ENCODE measurements at regions of chr4 and their contacts with region 1.

Region 1: DNA sequence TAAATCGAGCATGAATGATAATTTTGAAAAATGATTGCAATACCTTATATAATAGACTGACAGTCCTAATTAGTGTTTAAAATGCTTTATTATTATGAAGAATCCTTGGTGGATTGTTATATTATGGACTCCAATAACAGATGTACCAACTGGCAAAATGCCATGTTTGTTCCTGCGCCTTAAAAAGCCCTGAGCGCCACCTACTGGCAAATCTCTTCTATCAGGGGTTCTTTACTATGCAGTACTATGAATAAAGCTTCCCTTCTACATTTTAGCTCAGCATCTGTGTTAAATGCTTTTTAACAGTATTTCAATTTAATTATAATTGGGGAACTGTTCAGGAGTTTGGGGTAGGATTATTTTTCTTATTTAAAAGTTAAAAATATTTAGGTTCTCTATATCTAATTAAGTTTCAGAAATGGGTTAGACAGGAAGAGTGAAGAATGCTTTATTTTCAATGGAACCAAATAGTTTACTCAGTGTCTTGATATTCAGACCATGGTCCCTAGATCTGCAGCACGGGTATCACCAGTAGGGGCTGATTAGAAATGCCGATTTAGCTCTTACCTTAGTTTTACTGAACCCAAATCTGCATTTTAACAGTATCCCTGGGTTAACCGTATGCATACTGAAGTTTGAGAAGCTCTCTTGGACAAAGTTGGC is 20.1 kb downstream of the CFAP97 start:
- DNase-seq: peak; percentile 71
- H3K4me3 ChIP-seq: no peak overlapping the region
- H3K27ac ChIP-seq: peak overlapping the region in 1 of 2 donors; percentile 10
- H3K4me1 ChIP-seq: no peaks in the 10 kb centered on the region
- H3K27me3 ChIP-seq: no peaks in the 10 kb centered on the region
- CTCF ChIP-seq: peak in 2 of 3 donors; percentile 65 to 72
- POLR2A ChIP-seq: no peak

Region 2: DNA sequence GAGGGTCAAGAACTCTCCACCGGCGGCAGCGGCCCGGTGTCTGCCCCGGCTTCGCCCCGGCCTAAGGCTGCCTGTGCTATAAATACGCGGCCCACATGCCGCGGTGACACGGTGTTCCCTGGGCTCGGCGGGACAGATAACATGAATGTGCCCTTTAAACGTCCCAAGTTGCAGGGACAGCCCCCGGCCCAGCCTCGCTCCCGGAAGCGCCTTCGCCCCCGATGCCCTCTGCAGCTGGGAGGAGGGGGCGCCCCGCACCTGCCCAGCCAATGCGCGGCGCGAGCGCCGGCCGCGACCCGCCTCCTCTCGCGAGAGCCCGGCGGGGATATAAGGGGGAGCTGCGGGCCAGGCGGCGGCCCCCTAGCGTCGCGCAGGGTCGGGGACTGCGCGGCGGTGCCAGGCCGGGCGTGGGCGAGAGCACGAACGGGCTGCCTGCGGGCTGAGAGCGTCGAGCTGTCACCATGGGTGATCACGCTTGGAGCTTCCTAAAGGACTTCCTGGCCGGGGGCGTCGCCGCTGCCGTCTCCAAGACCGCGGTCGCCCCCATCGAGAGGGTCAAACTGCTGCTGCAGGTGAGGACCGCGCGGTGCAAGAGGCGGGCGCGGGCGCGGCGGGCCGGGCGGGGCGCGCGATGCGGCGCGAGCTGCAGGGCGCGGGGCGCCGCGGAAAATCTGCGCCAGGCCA is 40.7 kb before region 1 on chr4 and contains the start of gene SLC25A4:
- intact Hi-C with region 1: loop called (anchors 5 kb)
- DNase-seq: peak; percentile 72 to 81
- H3K4me3 ChIP-seq: peak within 1 kb of the TSS; percentile 59 to 91 (median 76)
- H3K27ac ChIP-seq: peak within 1 kb of the TSS; percentile 76 to 89
- H3K4me1 ChIP-seq: peaks cover 0 to 5% of the 10 kb centered on the region in 2 donors
- H3K27me3 ChIP-seq: no peaks in the 10 kb centered on the region
- CTCF ChIP-seq: peak in 2 of 3 donors; percentile 31 to 76
- POLR2A ChIP-seq: no peak
- total RNA-seq, gene SLC25A4: 15.2 to 21.4 (median 19.3) TPM

Region 3: DNA sequence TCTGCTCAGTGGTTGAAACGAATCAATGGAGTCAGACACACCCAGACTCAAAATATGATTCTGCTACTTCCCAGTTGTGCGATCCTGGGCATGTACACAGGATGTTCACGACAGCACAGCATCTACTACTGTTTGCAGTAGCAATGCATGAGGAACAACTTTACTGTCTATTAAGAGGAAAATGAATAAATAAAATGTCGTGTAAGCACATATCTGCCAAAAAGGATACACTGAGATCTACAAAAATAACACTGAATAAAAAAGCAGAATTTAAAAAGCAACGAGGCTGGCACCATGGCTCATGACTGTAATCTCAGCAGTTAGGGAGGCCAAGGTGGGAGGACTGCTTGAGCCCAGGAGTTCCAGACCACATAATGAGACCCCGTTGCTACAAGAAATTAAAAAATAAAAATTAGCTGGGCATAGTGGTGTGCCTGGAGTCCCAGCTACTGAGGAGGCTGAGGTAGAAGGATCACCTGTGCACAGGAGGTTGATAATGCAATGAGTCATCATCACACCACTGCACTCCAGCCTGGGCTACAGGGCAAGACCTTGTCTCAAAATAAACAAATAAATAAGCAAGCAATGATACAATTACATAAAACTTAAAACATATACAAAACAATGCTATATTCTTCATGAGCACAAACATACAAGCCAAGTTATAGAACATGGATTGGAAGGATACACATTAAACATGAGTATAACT is 11.3 kb after region 1 on chr4:
- intact Hi-C with region 1: loop called (anchors 1 kb)
- DNase-seq: no peak
- H3K4me3 ChIP-seq: no peak overlapping the region
- H3K27ac ChIP-seq: no peak overlapping the region
- H3K4me1 ChIP-seq: no peaks in the 10 kb centered on the region
- H3K27me3 ChIP-seq: no peaks in the 10 kb centered on the region
- CTCF ChIP-seq: no peak
- POLR2A ChIP-seq: no peak

Region 4: DNA sequence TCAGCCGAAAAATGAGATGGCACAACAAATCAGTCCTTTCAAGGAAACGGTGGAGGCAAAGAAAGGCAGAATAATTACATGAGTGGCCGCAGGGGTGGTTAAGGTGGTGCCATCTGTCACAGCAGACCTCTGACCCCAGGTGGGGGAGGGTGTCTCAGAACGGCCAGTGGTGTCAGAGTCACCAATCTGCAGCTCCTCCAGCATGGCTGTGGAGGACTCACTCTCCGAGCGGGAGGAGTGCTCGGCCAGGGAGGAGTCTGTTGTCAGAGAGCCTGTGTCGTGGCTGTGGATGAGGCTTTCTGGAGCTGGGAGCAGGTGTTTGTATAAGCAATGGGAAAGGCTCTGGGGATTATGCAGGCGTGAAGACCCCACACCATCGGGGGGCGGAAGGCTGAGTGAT is 481.9 kb after region 1 on chr4:
- intact Hi-C with region 1: no loop called
- DNase-seq: no peak
- H3K4me3 ChIP-seq: no peak overlapping the region
- H3K27ac ChIP-seq: no peak overlapping the region
- H3K4me1 ChIP-seq: no peaks in the 10 kb centered on the region
- H3K27me3 ChIP-seq: no peaks in the 10 kb centered on the region
- CTCF ChIP-seq: no peak
- POLR2A ChIP-seq: no peak